CD8-positive, alpha-beta memory T cell (primary cell): ENCODE measurements at regions of chr2 and their contacts with region 1.

Region 1: DNA sequence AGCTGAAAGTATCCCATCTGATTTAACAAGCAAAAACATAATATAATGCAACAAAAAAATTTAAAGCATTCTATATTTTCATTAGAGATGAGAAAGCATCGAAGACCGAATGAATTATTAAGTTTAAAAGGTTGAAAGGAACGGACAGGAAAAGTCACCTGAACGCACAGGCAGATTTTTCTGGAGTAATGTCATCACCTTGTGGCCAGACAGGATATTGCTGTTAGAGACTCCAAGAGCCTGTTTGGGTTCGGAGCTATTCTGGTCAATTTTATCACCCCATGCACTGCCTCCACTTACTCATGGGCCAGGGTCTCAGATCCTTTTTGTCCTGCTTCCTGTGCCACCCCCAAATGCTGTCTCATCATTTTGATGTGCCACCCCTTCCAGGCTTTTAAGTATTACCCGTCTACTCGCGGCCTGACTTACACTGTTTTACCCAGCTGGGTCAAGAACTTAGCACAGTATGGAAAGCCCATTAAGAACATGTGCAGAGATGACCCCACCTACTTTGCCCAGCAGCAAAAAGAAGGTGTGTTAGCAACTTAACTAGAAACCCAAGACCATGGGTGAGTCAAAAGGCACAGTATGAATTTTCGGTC is 27.3 kb downstream of the GKN2 start:
- DNase-seq: peak; percentile 24 to 62 (median 52)
- H3K4me3 ChIP-seq: no peak overlapping the region
- H3K4me3 Mint-ChIP-seq: no peak overlapping the region
- H3K27ac ChIP-seq: no peak overlapping the region
- H3K27ac Mint-ChIP-seq: no peak overlapping the region
- H3K4me1 ChIP-seq: no peaks in the 10 kb centered on the region
- H3K4me1 Mint-ChIP-seq: peaks cover 3 to 7% (median 6%) of the 10 kb centered on the region in 3 donors
- H3K27me3 ChIP-seq: no peaks in the 10 kb centered on the region
- H3K27me3 Mint-ChIP-seq: peaks cover 9 to 19% of the 10 kb centered on the region in 2 donors

Region 2: DNA sequence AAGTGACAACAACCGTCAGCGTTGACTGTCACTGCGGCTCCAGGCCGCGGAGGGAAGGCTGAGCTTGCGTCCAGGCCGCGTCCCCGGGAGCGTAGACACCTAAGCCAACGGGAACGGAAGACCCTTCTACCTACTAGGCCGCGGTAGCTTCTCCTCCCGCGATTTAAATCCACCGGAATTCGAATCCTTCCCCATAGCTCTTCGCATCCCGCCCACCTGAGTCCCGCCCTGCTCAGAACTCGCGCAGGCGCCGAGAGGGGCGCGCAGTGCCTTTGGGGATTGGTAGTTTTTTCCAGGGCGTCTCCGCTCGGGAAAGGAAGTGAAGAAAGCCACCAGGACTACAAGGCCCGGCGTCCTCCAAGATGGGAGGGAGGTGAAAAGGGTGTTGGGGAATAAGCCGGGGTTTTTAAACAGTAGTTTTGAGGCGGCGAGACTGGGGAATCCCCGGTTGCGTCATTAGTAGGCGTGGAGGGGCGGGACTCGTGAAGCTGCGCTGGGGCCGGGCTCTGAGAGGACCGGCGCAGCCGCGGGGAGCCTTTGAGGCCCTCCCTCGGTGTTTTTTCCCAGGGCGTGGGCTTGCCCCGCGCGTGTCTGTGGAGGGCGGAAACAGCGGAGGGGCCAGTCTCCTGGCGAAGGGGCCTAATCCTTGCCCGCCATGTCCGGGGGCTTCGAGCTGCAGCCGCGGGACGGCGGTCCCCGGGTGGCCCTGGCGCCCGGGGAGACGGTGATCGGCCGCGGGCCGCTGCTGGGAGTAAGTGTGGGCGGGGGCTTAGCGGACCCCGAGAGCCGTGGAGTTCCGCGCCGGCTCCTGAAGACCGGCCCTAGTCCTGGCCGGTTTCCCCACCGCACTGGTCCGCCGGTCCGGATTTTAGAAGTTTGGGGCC is 458.1 kb before region 1 on chr2 and contains the starts of genes APLF and FBXO48:
- CTCF ChIA-PET with region 1: interaction called, 27 read pairs
- POLR2A ChIA-PET with region 1: no interaction called
- DNase-seq: peak; percentile 96 to 99 (median 99)
- H3K4me3 ChIP-seq: peak within 1 kb of the TSS; percentile 98
- H3K4me3 Mint-ChIP-seq: peak within 1 kb of the TSS; percentile 92 to 99 (median 97)
- H3K27ac ChIP-seq: peak within 1 kb of the TSS; percentile 92
- H3K27ac Mint-ChIP-seq: peak within 1 kb of the TSS; percentile 90 to 99 (median 96)
- H3K4me1 ChIP-seq: peaks cover 25% of the 10 kb centered on the region
- H3K4me1 Mint-ChIP-seq: peaks cover 31 to 56% (median 42%) of the 10 kb centered on the region in 3 donors
- H3K27me3 ChIP-seq: no peaks in the 10 kb centered on the region
- H3K27me3 Mint-ChIP-seq: no peaks in the 10 kb centered on the region
- total RNA-seq, gene APLF: 3.6 to 4.0 TPM
- total RNA-seq, gene FBXO48: 1.5 to 1.6 TPM

Region 3: DNA sequence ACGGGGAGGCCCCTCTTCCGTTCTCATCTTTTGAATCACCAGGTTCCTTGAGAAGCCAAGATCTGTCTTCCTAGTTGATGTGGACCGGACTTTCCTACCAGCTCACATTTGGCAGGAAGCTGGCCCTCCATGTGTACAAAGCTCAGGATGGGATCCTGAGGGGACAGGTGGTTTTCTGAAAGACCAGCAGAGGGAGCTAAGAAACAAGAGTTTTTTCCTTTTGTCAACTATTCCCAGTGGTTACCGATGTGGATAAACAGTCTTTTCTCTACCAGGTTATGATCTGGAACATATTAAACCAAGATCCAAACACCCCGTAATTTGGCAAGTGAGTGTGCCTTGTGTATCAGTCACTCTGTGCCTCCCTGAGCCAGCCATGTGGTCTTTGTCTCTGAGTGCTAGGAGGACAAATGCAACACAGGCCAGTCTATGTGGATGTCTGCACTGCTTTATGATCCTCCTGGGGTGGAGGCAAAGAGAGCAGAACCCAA is 215.9 kb before region 1 on chr2:
- CTCF ChIA-PET with region 1: interaction called, 63 read pairs
- POLR2A ChIA-PET with region 1: no interaction called
- DNase-seq: no peak
- H3K4me3 ChIP-seq: no peak overlapping the region
- H3K4me3 Mint-ChIP-seq: no peak overlapping the region
- H3K27ac ChIP-seq: no peak overlapping the region
- H3K27ac Mint-ChIP-seq: peak overlapping the region in 3 of 8 donors; percentile 48 to 79 (median 69)
- H3K4me1 ChIP-seq: peaks cover 11% of the 10 kb centered on the region
- H3K4me1 Mint-ChIP-seq: peaks cover 9 to 10% (median 9%) of the 10 kb centered on the region in 3 donors
- H3K27me3 ChIP-seq: no peaks in the 10 kb centered on the region
- H3K27me3 Mint-ChIP-seq: peaks cover 0 to 3% of the 10 kb centered on the region in 2 donors

Region 4: GRCh38 chr2:68721482-68722101 is 203.8 kb before region 1 on chr2:
- CTCF ChIA-PET with region 1: interaction called, 16 read pairs
- POLR2A ChIA-PET with region 1: no interaction called
- DNase-seq: peak in 4 of 5 donors; percentile 20 to 69 (median 48)
- H3K4me3 ChIP-seq: peak overlapping the region; percentile 38
- H3K4me3 Mint-ChIP-seq: peak overlapping the region; percentile 42 to 86 (median 79)
- H3K27ac ChIP-seq: peak overlapping the region; percentile 43
- H3K27ac Mint-ChIP-seq: peak overlapping the region; percentile 83 to 99 (median 92)
- H3K4me1 ChIP-seq: peaks cover 82% of the 10 kb centered on the region
- H3K4me1 Mint-ChIP-seq: peaks cover 85 to 98% (median 96%) of the 10 kb centered on the region in 3 donors
- H3K27me3 ChIP-seq: no peaks in the 10 kb centered on the region
- H3K27me3 Mint-ChIP-seq: no peaks in the 10 kb centered on the region

Region 5: DNA sequence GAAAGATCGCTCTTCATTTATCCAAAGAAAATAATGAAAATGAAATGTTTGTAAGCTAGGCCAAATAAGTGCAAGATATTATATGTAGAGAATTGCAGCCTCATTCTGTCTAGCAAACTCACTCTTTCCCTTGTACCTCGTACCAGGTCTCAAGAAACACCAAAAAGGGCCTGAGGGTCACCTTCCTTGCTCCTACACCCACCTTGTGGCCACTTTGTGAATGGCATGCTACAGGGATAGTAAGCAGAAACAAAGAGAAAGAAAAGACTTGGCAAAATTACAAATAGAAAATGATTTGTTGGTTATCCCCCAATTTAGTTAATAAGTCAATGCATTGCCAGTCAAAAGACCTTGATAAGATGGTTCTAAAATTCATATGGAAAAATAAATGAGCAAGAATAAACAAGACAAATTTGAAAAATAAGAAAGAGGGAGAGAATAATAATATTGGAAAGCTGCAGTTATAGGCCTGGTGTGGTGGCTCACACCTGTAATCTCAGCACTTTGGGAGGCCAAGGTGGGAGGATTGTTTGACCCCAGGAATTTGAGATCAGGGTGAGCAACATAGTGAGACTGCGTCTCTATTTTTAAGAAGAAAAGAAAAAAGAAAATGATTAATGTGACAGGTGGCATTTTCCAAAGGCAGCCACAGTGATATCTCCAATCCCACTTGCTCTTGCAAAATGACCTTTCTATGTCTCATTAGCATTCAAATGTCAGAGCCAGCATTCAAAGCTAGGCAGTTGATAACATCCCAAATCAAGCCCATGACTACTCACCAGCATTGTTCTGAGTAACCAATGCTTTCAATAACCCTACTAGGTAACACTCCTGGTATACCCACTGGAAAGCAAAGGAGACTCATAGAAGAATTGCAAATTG is 15.4 kb before region 1 on chr2:
- CTCF ChIA-PET with region 1: interaction called, 18 read pairs
- POLR2A ChIA-PET with region 1: interaction called, 3 read pairs
- DNase-seq: peak; percentile 39 to 74 (median 54)
- H3K4me3 ChIP-seq: no peak overlapping the region
- H3K4me3 Mint-ChIP-seq: peak overlapping the region in 3 of 7 donors; percentile 28 to 42 (median 30)
- H3K27ac ChIP-seq: no peak overlapping the region
- H3K27ac Mint-ChIP-seq: peak overlapping the region; percentile 43 to 90 (median 82)
- H3K4me1 ChIP-seq: peaks cover 58% of the 10 kb centered on the region
- H3K4me1 Mint-ChIP-seq: peaks cover 34 to 39% (median 36%) of the 10 kb centered on the region in 3 donors
- H3K27me3 ChIP-seq: no peaks in the 10 kb centered on the region
- H3K27me3 Mint-ChIP-seq: no peaks in the 10 kb centered on the region